ENCODE measurements at regions of chr2 and their contacts with region 1.

Region 1: GRCh38 chr2:64523666-64524603 is at the start of gene AFTPH:
- DNase-seq: peak; percentile 98 to 100 (median 99)
- H3K4me3 ChIP-seq: peak within 1 kb of the TSS; percentile 94 to 95
- H3K4me3 Mint-ChIP-seq: peak within 1 kb of the TSS; percentile 99 to 100 (median 99)
- H3K27ac ChIP-seq: peak within 1 kb of the TSS; percentile 96
- H3K27ac Mint-ChIP-seq: peak within 1 kb of the TSS; percentile 97 to 99 (median 99)
- H3K4me1 ChIP-seq: peaks cover 40% of the 10 kb centered on the region
- H3K4me1 Mint-ChIP-seq: peaks cover 32 to 50% (median 39%) of the 10 kb centered on the region in 4 donors
- H3K27me3 ChIP-seq: no peaks in the 10 kb centered on the region
- H3K27me3 Mint-ChIP-seq: peaks cover 0 to 2% of the 10 kb centered on the region in 2 donors
- total RNA-seq, gene AFTPH: 48.3 to 48.9 TPM

Region 2: DNA sequence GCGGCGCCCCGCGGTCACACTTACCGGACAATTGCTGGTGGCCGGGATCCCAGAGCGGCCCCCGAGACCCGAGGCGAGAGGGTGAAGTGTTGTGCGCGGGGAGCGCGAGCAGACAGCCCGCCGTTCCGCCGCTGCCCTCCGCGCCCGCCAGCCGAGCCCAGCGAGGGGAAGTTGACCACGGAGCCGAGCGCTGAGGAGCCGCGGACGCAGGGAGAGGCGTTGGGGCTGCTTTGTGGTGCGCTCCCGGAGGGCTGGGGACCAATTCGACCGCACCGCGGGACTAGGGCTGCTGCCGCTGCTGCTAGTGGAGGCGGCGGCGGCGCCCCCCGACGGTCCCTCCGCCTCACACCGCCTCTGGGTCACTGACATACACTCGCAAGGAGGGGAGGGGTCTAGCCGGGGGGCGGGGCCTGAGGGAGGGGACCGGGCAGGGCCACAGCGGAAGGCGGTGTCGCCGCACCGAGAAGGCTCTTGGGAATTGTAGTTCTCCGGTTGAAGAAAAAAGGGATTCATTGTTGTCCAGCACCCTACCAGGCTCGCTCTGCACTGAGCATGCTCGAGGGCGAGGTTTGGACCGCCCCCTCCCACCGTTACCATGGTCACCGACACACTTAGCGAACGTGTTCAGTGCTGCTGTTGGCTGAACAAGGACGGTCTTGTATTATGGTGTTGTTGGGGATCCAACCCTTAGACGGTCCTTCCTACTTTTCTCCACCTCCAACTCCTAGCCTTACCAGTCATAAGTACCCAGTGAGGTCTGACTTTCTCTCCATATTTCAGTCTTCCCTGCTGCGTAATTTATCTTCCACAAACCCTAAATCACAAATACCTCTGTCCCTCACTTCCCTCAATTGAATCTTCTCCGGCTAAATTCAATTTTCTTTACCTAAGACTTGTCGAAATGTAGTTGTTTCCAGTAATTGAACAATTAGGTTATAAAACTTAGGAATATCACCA is 379.6 kb before region 1 on chr2 and contains the start of gene PELI1:
- CTCF ChIA-PET with region 1: no interaction called
- POLR2A ChIA-PET with region 1: interaction called, 9 read pairs
- intact Hi-C with region 1: loop called (anchors 1 kb)
- DNase-seq: peak; percentile 86 to 94 (median 90)
- H3K4me3 ChIP-seq: peak within 1 kb of the TSS; percentile 61 to 81
- H3K4me3 Mint-ChIP-seq: peak within 1 kb of the TSS; percentile 92 to 99 (median 98)
- H3K27ac ChIP-seq: peak within 1 kb of the TSS; percentile 88
- H3K27ac Mint-ChIP-seq: peak within 1 kb of the TSS; percentile 96 to 99 (median 98)
- H3K4me1 ChIP-seq: peaks cover 53% of the 10 kb centered on the region
- H3K4me1 Mint-ChIP-seq: peaks cover 22 to 39% (median 25%) of the 10 kb centered on the region in 4 donors
- H3K27me3 ChIP-seq: no peaks in the 10 kb centered on the region
- H3K27me3 Mint-ChIP-seq: no peaks in the 10 kb centered on the region
- total RNA-seq, gene PELI1: 36.7 to 40.5 TPM

Region 3: DNA sequence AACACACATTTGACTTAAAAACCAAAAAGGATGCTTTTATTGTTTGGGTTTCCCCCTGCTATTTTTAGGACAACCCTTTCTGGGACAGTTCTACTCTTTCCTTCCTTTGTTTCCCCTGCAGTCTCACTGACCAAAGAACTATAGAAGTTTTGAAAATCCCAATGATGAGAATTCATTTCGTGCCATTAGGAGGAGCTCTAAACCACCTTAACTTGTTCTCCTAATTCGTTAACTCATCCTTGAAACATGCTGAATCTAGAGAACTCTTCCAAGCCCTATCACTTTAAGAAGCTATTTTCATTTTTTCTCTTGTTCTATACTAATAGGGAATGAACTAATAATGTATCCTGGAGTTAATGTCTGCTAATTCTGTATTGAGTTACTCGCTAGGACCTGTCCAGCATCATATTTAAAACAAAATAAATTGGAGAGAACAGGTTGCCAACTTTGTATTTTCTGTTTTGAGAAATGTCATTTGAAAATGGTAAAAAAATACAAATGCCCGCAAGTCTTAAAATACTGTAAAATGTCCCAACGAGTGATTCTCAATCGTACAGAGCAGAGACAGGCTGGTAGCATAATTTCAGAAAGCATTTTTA is 63.0 kb after region 1 on chr2:
- CTCF ChIA-PET with region 1: interaction called, 12 read pairs
- POLR2A ChIA-PET with region 1: no interaction called
- intact Hi-C with region 1: no loop called
- DNase-seq: peak in 4 of 5 donors; percentile 26 to 46 (median 38)
- H3K4me3 ChIP-seq: no peak overlapping the region
- H3K4me3 Mint-ChIP-seq: no peak overlapping the region
- H3K27ac ChIP-seq: no peak overlapping the region
- H3K27ac Mint-ChIP-seq: no peak overlapping the region
- H3K4me1 ChIP-seq: no peaks in the 10 kb centered on the region
- H3K4me1 Mint-ChIP-seq: peaks cover 0 to 4% (median 2%) of the 10 kb centered on the region in 4 donors
- H3K27me3 ChIP-seq: no peaks in the 10 kb centered on the region
- H3K27me3 Mint-ChIP-seq: no peaks in the 10 kb centered on the region

Region 4: DNA sequence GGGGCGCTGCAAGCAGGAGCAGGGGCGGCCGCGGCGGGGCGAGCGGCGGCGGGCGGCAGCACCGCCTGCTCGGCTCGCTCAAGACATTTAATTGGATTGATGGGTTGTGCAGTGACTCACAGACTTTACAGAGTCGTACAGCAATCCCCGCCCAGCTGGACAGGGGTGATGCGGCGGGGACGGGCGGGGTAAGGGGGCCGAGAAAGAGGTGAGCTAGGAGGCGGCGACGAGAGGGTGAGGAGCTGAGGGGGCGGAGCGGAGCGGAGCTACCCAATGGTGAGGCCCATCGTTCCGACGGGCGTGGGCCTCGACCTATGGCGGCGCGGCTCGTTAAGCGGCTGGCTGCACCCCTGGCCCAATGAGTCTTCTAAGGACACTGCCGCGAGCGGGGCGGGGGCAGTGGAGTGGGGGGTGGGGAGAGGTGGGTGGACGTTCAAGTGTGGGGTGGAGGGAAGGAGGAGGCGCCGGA is 226.9 kb after region 1 on chr2:
- CTCF ChIA-PET with region 1: interaction called, 4 read pairs
- POLR2A ChIA-PET with region 1: interaction called, 22 read pairs
- intact Hi-C with region 1: loop called (anchors 1 kb)
- DNase-seq: peak; percentile 96 to 99 (median 97)
- H3K4me3 ChIP-seq: peak overlapping the region; percentile 84 to 98
- H3K4me3 Mint-ChIP-seq: peak overlapping the region; percentile 98 to 99 (median 99)
- H3K27ac ChIP-seq: peak overlapping the region; percentile 93
- H3K27ac Mint-ChIP-seq: peak overlapping the region; percentile 91 to 98 (median 96)
- H3K4me1 ChIP-seq: peaks cover 20% of the 10 kb centered on the region
- H3K4me1 Mint-ChIP-seq: peaks cover 13 to 30% (median 23%) of the 10 kb centered on the region in 4 donors
- H3K27me3 ChIP-seq: no peaks in the 10 kb centered on the region
- H3K27me3 Mint-ChIP-seq: no peaks in the 10 kb centered on the region

Region 5: GRCh38 chr2:64873472-64873924 is 349.6 kb after region 1 on chr2:
- CTCF ChIA-PET with region 1: interaction called, 37 read pairs
- POLR2A ChIA-PET with region 1: interaction called, 3 read pairs
- intact Hi-C with region 1: loop called (anchors 1 kb)
- DNase-seq: peak; percentile 64 to 76 (median 68)
- H3K4me3 ChIP-seq: peak overlapping the region in 1 of 2 donors; percentile 7
- H3K4me3 Mint-ChIP-seq: peak overlapping the region in 7 of 8 donors; percentile 0 to 70 (median 31)
- H3K27ac ChIP-seq: no peak overlapping the region
- H3K27ac Mint-ChIP-seq: peak overlapping the region in 3 of 7 donors; percentile 23 to 48 (median 26)
- H3K4me1 ChIP-seq: peaks cover 8% of the 10 kb centered on the region
- H3K4me1 Mint-ChIP-seq: peaks cover 6 to 7% (median 6%) of the 10 kb centered on the region in 4 donors
- H3K27me3 ChIP-seq: no peaks in the 10 kb centered on the region
- H3K27me3 Mint-ChIP-seq: peaks cover 1 to 3% of the 10 kb centered on the region in 2 donors

Region 6: DNA sequence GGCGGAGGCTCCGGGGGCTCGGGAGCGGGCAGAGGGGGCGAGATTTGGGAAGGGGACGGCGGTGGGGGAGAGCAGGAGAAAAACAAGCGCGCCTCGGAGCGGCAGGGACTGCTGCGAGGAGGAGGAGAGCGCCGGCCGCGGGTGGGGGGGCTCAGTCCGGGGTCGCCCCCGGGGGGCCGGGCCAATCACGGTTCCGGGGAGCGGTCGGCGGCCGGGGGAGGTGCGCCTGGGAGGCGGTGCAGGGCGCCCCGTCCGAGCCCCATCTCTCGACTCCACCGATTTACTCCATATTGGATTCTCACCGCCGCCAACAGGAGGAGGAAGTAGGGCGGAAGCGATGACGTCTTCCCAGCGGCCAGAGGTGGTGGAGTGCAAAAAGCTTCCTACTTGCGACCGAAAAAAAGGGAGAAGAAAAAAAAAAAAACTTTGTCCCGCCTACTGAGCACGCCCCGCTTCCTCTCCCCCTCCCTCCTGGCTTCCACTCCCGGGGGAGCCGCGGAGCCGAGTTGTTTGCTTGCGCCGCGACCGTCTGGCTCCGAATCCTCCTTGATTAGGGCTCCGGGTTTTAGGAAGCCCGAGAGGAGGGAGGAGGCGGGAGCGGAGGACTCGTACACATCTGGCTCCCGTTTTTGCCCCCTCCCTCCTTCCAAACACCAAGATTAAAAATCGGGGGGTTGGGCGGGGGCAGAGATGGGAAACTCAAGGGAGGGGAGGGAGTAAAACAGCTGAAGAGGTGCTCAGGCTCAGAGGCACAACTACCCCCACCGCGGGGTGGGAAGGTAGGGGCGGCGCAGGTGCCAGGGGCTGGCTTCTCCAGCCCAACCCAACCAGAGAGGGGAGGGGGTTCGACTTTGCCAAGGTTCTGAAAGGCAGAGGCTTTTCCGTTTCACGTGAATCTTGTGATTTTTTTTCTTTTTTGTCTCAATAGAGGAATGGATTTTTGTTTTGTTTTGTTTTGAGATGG is 908.6 kb after region 1 on chr2 and contains the start of gene SPRED2:
- CTCF ChIA-PET with region 1: no interaction called
- POLR2A ChIA-PET with region 1: no interaction called
- intact Hi-C with region 1: loop called (anchors 2 kb)
- DNase-seq: peak; percentile 64 to 86 (median 67)
- H3K4me3 ChIP-seq: peak within 1 kb of the TSS; percentile 39 to 62
- H3K4me3 Mint-ChIP-seq: peak within 1 kb of the TSS; percentile 90 to 97 (median 91)
- H3K27ac ChIP-seq: peak within 1 kb of the TSS; percentile 34
- H3K27ac Mint-ChIP-seq: peak within 1 kb of the TSS; percentile 78 to 93 (median 87)
- H3K4me1 ChIP-seq: peaks cover 30% of the 10 kb centered on the region
- H3K4me1 Mint-ChIP-seq: peaks cover 10 to 40% (median 14%) of the 10 kb centered on the region in 4 donors
- H3K27me3 ChIP-seq: peaks cover 10% of the 10 kb centered on the region
- H3K27me3 Mint-ChIP-seq: peaks cover 11 to 29% of the 10 kb centered on the region in 2 donors
- total RNA-seq, gene SPRED2: 0.52 to 0.72 TPM